Left cardiac atrium (tissue), 4 donors: ENCODE measurements at regions of chr2 and their contacts with region 1.

Region 1: DNA sequence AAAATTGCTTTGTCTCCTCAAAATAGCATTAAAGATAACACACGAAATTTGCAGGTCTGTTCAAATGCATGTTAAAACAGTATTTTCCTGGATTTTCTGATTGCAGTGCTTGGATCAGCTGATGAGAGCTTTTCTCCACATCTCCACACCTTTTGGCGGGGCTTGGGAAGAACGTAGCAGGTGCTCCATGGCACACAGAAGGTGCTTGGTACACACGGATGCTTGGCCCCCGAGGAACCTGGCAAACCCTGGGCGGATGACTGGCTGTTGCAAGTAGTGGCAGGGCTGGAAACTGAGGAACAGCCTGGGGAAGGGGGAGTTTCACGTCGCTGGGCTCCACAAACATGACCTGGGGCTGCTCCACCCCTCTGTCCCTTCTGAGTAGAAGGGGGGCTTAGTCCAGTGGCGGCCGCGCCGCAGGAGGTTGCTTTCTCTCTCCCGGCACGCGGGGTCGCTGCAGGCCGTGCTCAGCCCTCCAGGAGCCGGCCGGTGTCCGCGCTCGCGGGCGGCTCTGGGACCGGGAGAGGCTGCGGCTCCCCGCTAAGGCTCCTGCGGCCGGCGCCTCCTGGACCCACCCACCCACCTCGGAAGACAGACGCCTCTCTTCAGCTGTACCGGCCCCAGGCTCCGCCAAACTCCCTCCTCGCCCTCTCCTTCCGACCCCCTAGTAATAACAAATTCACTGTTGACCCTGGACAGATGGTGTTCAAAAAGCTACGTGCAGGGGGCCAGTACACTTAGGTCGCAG is 69.3 kb downstream of the MARCO start:
- DNase-seq: peak; percentile 65
- ATAC-seq: peak; percentile 92

Region 2: DNA sequence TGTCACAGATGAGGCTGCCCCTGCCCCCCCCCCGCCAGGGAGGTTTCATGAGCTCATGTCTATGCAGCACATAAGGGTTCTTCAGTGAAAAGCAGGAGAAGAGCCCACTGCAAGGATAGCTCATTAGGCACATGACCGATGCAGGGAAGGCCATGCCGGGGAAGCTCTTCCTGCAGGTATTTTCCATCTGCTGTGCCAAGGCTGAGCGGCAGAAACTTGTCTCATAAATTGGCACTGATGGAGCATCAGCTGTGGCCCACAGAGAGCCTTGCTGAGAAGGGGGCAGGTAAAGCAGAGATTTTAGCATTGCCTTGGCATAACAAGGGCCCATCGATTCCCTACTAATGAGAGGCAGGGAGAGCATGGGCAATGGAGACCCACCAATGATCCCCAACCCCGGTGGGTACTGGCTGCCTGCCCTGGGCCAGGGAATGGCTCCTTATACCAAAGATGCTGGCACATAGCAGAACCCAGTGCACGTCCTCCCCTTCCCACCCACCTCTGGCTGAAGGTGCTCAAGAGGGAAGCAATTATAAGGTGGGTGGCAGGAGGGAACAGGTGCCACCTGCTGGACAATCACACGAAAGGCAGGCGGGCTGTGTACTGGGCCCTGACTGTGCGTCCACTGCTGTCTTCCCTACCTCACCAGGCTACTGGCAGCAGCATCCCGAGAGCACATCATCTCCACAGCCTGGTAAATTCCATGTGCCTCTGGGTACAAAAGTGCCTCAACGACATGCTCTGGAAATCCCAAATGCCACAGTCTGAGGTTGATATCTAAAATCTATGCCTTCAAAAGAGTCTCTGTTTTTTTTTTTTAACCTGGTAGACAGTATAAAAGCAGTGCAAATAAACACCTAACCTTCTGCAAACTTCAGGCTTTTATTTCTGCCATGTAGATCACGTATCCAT is 253.7 kb after region 1 on chr2:
- intact Hi-C with region 1: loop called (anchors 10 kb)
- DNase-seq: no peak
- ATAC-seq: peak; percentile 61 to 85

Region 3: GRCh38 chr2:119290859-119291587 is 279.7 kb after region 1 on chr2:
- intact Hi-C with region 1: loop called in 1 of 2 experiments (anchors 2 kb)
- DNase-seq: peak; percentile 91
- ATAC-seq: peak; percentile 87 to 90